GM10248 (cell line): ENCODE measurements at regions of chr1 and their contacts with region 1.

Region 1: DNA sequence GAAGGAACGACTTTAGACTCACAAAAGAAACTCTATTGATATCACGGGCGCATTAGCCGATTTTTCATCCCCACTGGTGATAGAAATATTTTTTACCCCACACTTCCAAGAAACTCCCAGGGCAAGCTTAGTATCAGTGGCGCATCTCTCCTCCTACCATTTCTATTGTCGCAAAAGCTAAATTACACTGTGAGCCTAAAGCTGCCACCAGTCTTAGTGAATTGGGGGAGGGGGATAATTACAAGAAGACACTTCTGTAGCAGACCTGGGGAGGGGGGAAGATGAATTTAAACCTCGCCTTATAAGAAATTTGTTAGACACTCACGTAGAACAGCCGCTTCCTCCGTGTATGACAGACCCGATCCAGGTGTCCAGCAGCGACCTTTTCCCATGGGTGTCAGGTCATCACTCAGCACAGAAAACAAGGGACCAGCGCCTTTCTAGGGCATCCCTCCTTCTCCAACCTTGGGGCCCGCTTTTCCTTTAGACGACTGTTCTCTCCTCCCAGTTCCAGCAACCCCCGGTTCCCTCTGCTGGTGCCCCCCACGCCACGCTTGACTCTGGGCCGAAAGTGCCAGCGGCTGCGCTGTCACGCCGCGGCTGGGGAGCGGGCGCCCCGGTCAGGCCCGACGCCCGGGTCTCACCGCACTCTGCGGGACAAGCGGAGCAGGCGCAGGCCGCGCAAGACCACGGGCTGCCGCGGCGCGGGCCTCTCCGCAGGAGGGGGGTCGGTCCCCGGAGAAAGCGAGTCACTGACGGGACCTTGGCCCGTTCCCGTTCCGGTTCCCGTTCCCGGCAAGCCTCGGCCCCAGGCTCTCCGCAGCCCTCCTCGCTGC is 821 bp downstream of the PHC2 start:
- DNase-seq: no peak
- CTCF ChIP-seq: no peak

Region 2: DNA sequence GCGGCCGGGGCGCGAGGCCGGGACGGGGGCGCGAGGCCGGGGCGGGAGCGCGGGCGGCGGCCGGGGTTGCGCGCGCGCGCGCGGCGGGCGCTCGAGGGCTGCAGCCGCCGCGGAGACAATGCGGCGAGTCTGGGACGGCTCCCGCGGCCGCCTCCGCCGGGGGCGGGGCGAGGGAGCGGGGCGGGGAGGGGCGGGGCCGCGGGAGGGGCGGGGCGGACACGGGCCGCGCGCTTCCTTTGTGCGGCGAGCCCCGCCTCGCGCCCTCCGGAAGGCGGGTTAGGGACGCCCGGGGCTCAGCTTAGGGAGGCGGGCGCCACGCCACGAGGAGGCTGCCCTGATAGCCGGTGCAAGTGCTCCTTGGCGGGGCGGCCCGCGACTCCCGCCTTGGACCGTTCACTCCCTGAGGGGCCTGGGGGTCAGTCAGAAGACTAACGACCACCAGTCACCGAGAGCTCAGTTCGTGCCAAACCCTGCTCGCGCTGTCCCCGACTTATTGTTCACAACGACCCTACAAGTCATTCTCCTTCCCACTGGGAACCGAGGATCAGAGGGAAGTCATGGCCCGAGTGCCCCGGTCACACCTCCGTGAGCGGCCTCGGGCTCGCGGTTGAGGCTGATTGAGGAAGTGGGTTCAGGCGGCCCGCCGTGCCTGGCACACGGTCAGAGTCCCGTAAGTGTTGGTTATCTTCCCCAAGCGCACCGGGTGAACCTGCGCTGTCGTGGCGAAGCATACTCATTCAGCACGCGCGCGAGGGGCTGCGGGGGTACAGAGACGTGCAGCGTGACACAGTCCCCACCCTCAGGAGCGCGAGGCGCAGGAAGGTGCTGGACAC is 80.1 kb before region 1 on chr1:
- CTCF ChIA-PET with region 1: no interaction called
- POLR2A ChIA-PET with region 1: no interaction called
- DNase-seq: peak; percentile 96
- CTCF ChIP-seq: no peak

Region 3: DNA sequence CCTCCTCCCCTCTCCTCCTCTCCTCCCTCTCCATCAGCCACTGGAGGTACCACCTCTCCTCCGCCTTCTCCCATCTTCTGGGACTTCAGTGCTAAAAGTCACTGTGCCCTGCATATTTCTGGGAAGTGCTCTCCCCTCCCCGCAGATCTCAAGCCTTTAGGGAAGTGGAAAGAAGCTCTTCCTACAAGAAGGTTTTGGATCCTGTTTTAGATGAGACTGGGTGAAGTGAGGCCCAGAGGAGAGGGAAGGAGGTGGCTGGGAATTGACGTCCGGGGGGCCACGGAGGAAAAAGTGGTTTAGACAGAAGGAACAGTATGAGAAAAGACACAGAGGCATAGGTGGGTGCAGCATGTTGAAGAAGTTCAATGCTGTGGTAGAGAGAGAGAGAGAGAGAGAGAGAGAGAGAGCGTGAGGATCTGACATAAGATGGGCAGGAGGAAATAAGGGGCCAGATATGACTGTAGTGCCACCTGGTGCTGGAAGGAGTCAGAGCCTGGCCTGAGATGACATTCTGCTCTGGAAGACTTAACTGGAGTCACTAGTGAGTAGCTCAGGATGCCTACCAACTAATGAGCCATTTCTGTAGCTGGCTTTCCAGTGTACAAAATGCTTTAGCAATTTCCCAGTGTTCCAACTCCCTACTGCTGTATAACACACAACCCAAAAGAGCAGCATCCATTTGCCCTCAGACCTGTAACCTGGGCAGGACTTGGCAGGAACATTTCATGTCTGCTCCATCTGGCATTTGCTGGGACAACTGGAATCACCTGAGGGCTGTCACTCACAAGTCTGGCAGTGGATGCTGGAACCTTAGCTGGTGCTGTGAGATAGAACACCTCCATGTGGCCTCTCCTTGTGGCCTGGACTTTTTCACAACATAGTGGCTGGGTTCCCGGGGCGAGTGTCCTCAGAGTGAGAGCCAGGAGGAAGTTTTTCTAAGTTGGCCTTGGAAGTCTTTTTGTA is 25.7 kb after region 1 on chr1:
- CTCF ChIA-PET with region 1: interaction called, 4 read pairs
- POLR2A ChIA-PET with region 1: interaction called, 13 read pairs
- DNase-seq: peak; percentile 70
- CTCF ChIP-seq: peak; percentile 70